Activated naive CD4-positive, alpha-beta T cell treated with anti-CD3 and anti-CD28 coated beads, Interleukin-2, amount 10 ng/mL, durations not matched to agents 7 days and 5 days (primary cell): ENCODE measurements at regions of chr20 and their contacts with region 1.

Region 1: DNA sequence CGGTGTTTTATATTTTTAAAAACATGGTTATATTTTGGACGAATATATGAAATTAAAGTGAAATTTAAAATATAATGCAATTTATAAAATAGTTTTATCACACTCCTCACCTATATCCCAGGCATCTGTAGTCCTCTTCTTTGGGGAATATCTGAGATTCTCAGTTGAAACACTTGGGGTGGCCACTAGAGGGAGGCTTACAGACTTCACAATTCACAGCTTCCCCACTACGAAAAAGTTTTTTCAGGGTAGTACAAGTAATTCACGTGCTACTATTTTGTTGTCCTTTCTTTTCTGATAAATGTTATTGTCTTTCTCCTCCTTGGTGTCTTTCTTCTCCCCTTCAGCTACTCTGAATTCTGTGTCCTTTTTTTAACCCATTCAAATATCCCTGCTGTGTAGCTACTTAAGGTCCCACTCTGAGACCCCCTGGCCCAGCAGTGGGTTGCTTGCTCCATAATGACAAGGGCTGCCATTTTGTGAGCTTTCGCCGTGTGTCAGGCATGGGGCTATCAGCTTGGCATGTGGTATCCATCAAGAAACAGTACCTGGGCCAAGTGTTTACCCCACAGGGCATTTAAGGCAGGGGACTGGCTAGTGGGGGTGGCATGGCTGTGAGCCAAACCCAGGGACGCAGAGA is 43.6 kb upstream of the PHACTR3 start:
- DNase-seq: no peak
- H3K4me3 Mint-ChIP-seq: no peak overlapping the region
- H3K27ac Mint-ChIP-seq: no peak overlapping the region
- H3K4me1 Mint-ChIP-seq: no peaks in the 10 kb centered on the region
- H3K27me3 Mint-ChIP-seq: peaks cover 4% of the 10 kb centered on the region

Region 2: DNA sequence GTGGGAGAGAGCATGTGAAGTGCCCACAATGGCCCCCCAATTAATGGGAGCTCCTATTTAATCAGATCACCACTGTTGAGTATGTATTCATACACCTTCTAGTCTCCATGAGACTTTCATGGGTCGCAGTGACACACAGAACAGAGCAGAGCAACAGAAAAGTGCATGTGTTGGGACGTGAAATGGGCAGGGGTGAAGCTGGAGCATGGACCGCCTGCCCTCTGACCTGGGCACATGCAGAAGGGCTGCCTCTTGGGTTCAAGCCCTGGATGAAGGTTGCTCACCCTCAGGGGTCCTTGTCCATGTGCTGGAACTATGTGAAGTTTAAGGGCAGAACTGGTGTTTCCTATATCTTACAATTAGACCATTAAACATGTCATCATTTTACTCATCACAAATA is 62.4 kb before region 1 on chr20:
- CTCF ChIA-PET with region 1: no interaction called
- DNase-seq: no peak
- H3K4me3 Mint-ChIP-seq: no peak overlapping the region
- H3K27ac Mint-ChIP-seq: no peak overlapping the region
- H3K4me1 Mint-ChIP-seq: no peaks in the 10 kb centered on the region
- H3K27me3 Mint-ChIP-seq: peaks cover 34% of the 10 kb centered on the region

Region 3: GRCh38 chr20:59571551-59572314 is 11.0 kb after region 1 on chr20:
- CTCF ChIA-PET with region 1: interaction called, 21 read pairs
- DNase-seq: peak; percentile 72
- H3K4me3 Mint-ChIP-seq: no peak overlapping the region
- H3K27ac Mint-ChIP-seq: no peak overlapping the region
- H3K4me1 Mint-ChIP-seq: peaks cover 7% of the 10 kb centered on the region
- H3K27me3 Mint-ChIP-seq: peaks cover 45% of the 10 kb centered on the region

Region 4: GRCh38 chr20:59605165-59606042 is 44.7 kb after region 1 on chr20:
- CTCF ChIA-PET with region 1: no interaction called
- DNase-seq: no peak
- H3K4me3 Mint-ChIP-seq: no peak overlapping the region
- H3K27ac Mint-ChIP-seq: no peak overlapping the region
- H3K4me1 Mint-ChIP-seq: no peaks in the 10 kb centered on the region
- H3K27me3 Mint-ChIP-seq: peaks cover 82% of the 10 kb centered on the region